MCF 10A (cell line): ENCODE measurements at regions of chr9 and their contacts with region 1.

Region 1: DNA sequence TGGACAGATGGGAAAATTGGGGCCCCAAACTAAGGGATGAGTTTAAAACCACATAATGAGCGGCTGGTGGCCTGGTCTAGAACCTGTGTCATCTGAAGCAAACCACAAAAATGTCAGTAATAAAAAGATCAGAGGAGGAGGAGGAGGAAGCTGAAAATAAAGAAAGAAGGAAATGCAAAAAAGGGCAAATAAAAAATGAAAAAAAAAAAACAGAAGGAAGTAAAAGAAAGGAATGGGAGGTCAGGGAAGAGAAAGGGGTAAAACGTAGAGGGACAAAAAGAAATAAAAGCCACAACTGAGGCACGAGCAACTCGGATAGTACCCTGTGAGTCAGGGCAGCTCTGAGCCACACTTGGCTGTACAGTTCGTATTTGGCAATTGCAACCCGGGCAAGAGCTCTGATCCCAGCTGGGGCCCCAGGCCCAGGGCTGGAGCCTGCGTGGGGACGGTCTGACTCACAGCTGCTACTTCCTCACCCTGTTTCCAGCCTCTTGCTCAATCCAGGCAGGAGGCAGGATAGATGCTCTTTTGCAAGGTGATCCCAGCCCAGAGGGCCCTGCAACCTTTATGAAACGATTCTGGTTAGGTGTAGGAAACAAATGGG is 137.9 kb upstream of the TRIM32 start:
- DNase-seq: peak; percentile 99
- H3K4me3 Mint-ChIP-seq: peak overlapping the region; percentile 1
- H3K27ac Mint-ChIP-seq: no peak overlapping the region
- H3K4me1 Mint-ChIP-seq: peaks cover 20% of the 10 kb centered on the region
- H3K27me3 Mint-ChIP-seq: no peaks in the 10 kb centered on the region
- CTCF ChIP-seq: no peak

Region 2: DNA sequence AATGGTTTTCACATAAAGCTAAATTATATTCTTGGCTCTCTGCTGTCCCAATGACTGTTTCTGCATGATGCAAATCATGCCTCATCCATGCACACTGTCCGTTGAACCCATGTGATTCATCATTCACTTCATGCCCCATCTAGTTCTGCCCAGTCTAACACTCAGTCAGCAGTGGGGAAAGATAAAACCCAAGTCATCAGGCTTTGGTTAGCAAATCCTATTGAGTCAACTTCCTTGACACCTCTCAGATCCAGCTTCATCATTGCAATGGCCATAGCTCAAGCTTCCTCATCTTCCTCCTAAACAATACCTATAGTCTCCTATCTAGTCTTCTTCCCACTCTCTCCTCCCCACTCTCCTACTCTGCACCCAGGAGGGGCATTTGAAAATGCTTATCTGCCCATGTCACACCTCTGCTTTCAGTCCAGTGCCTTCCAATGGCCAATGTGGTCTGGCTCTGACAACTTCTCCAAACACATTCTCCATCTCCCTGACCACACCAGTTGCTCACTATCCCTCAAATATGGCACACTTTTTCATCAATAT is 128.1 kb before region 1 on chr9:
- CTCF ChIA-PET with region 1: no interaction called
- POLR2A ChIA-PET with region 1: no interaction called
- intact Hi-C with region 1: loop called (anchors 1 kb)
- DNase-seq: peak; percentile 55
- H3K4me3 Mint-ChIP-seq: no peak overlapping the region
- H3K27ac Mint-ChIP-seq: no peak overlapping the region
- H3K4me1 Mint-ChIP-seq: peaks cover 9% of the 10 kb centered on the region
- H3K27me3 Mint-ChIP-seq: no peaks in the 10 kb centered on the region
- CTCF ChIP-seq: no peak

Region 3: GRCh38 chr9:116504893-116505480 is 44.2 kb before region 1 on chr9:
- CTCF ChIA-PET with region 1: no interaction called
- POLR2A ChIA-PET with region 1: interaction called, 3 read pairs
- intact Hi-C with region 1: loop called (anchors 5 kb)
- DNase-seq: no peak
- H3K4me3 Mint-ChIP-seq: no peak overlapping the region
- H3K27ac Mint-ChIP-seq: no peak overlapping the region
- H3K4me1 Mint-ChIP-seq: peaks cover 35% of the 10 kb centered on the region
- H3K27me3 Mint-ChIP-seq: no peaks in the 10 kb centered on the region
- CTCF ChIP-seq: no peak

Region 4: GRCh38 chr9:116516456-116516855 is 32.7 kb before region 1 on chr9:
- CTCF ChIA-PET with region 1: no interaction called
- POLR2A ChIA-PET with region 1: no interaction called
- intact Hi-C with region 1: no loop called
- DNase-seq: no peak
- H3K4me3 Mint-ChIP-seq: no peak overlapping the region
- H3K27ac Mint-ChIP-seq: no peak overlapping the region
- H3K4me1 Mint-ChIP-seq: no peaks in the 10 kb centered on the region
- H3K27me3 Mint-ChIP-seq: no peaks in the 10 kb centered on the region
- CTCF ChIP-seq: no peak